GM10248 (cell line): ENCODE measurements at regions of chr3 and their contacts with region 1.

Region 1: GRCh38 chr3:82133070-82133606 is 371.7 kb upstream of the GBE1 start:
- DNase-seq: peak; percentile 36
- CTCF ChIP-seq: peak; percentile 66

Region 2: DNA sequence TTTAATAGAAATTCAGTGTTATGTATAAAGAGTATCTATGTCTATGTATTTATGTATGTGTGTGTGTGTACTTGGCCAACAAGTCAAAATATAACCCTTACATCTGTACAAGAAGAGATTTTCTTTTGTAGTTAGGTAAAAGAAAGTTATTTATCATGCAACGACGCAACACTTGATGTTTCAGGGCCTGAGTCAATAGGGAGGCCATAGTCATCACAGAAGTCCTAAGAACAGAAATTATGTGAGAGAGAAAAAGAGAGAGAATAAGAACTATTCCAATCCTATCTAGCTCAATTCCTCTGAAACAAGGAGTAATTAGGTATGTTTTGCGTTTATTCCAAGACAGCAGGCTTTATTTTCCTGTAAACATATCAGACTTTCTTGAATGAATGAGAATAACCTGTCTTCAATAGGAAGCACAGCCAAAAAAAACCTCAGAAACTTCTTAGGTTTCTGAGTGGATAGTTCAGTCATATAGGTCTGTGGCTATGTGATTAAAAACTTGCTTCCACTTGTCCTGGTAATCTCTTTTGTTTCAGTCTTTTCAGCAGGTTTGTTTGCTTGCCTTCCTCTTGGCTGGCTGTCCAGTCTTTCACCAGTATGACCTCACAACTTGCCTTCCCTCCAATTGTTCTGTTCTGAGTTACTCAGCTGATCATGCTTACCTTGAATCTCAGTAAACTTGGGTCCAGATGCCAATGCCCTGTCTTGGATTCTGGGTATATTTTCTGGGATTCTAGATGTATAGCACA is 10.7 kb after region 1 on chr3:
- CTCF ChIA-PET with region 1: interaction called, 14 read pairs
- POLR2A ChIA-PET with region 1: no interaction called
- DNase-seq: no peak
- CTCF ChIP-seq: no peak

Region 3: GRCh38 chr3:82306189-82306588 is 173.1 kb after region 1 on chr3:
- CTCF ChIA-PET with region 1: no interaction called
- POLR2A ChIA-PET with region 1: no interaction called
- DNase-seq: no peak
- CTCF ChIP-seq: no peak